SK-N-SH (cell line): ENCODE measurements at regions of chr2 and their contacts with region 1.

Region 1: GRCh38 chr2:41698678-41699422 is 349.0 kb upstream of the PKDCC start:
- DNase-seq: peak; percentile 85
- H3K4me3 ChIP-seq: peak overlapping the region in 1 of 2 experiments; percentile 12; a peak in 1 of 4 replicates
- H3K27ac ChIP-seq: no peak overlapping the region
- H3K4me1 ChIP-seq: peaks cover 0 to 6% of the 10 kb centered on the region in 2 experiments; a peak in 1 of 4 replicates
- H3K27me3 ChIP-seq: no peaks in the 10 kb centered on the region
- CTCF ChIP-seq: peak; percentile 92
- EP300 ChIP-seq: no peak
- RAD21 ChIP-seq: peak; percentile 96

Region 2: GRCh38 chr2:39919511-39920306 is 1779.1 kb before region 1 on chr2:
- CTCF ChIA-PET with region 1: interaction called, 82 read pairs
- POLR2A ChIA-PET with region 1: no interaction called
- DNase-seq: no peak
- H3K4me3 ChIP-seq: no peak overlapping the region
- H3K27ac ChIP-seq: no peak overlapping the region
- H3K4me1 ChIP-seq: no peaks in the 10 kb centered on the region; a peak in 1 of 4 replicates
- H3K27me3 ChIP-seq: no peaks in the 10 kb centered on the region
- CTCF ChIP-seq: no peak
- EP300 ChIP-seq: no peak
- RAD21 ChIP-seq: no peak

Region 3: GRCh38 chr2:40448468-40449079 is 1250.3 kb before region 1 on chr2:
- CTCF ChIA-PET with region 1: interaction called, 25 read pairs
- POLR2A ChIA-PET with region 1: no interaction called
- DNase-seq: peak; percentile 60
- H3K4me3 ChIP-seq: peak overlapping the region in 1 of 2 experiments; percentile 9; a peak in 1 of 4 replicates
- H3K27ac ChIP-seq: peak overlapping the region in 1 of 2 experiments; percentile 88; a peak in 1 of 4 replicates
- H3K4me1 ChIP-seq: peaks cover 0 to 17% of the 10 kb centered on the region in 2 experiments; a peak in 2 of 4 replicates
- H3K27me3 ChIP-seq: no peaks in the 10 kb centered on the region
- CTCF ChIP-seq: peak; percentile 80
- EP300 ChIP-seq: no peak
- RAD21 ChIP-seq: peak; percentile 76

Region 4: DNA sequence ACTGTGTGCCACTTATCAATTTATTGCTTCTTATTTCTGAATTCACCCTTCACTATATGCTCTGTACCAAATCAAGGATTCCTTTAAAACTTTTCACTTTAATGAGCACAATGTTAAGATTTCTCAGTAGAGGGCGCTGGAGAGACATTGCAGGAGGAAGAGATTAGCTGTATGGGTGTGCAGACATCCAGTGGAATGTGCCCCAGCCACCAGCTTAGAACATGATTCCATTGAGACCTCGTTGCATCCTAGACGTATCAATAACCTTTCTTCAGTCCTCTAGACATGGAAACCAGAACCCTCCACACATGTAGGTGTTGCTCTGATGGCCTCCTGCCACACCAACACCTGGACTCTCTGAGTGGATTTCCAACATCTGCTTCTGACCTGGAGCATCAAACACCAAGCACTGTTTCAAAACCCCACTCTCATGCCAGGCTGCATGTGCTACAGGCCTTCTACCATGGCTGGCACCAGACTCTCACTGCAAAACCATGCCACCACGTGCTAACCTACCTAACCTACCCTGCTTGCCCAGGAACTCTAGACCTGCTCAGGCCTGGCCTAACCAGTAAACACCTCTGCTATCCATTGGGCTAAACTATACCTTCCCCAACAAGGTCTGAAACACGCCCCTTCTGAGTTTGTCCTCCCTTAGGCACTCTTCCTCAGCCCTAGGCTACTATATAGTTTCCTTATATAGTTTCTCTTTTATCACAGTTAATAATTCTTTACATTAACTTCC is 284.2 kb before region 1 on chr2:
- CTCF ChIA-PET with region 1: interaction called, 133 read pairs
- POLR2A ChIA-PET with region 1: interaction called, 3 read pairs
- DNase-seq: peak; percentile 27
- H3K4me3 ChIP-seq: no peak overlapping the region
- H3K27ac ChIP-seq: no peak overlapping the region
- H3K4me1 ChIP-seq: no peaks in the 10 kb centered on the region
- H3K27me3 ChIP-seq: no peaks in the 10 kb centered on the region
- CTCF ChIP-seq: peak; percentile 73
- EP300 ChIP-seq: no peak
- RAD21 ChIP-seq: peak; percentile 85

Region 5: GRCh38 chr2:41678639-41679038 is 20.2 kb before region 1 on chr2:
- CTCF ChIA-PET with region 1: interaction called, 18 read pairs
- POLR2A ChIA-PET with region 1: no interaction called
- DNase-seq: no peak
- H3K4me3 ChIP-seq: no peak overlapping the region
- H3K27ac ChIP-seq: no peak overlapping the region
- H3K4me1 ChIP-seq: no peaks in the 10 kb centered on the region
- H3K27me3 ChIP-seq: no peaks in the 10 kb centered on the region
- CTCF ChIP-seq: no peak
- EP300 ChIP-seq: no peak
- RAD21 ChIP-seq: no peak

Region 6: DNA sequence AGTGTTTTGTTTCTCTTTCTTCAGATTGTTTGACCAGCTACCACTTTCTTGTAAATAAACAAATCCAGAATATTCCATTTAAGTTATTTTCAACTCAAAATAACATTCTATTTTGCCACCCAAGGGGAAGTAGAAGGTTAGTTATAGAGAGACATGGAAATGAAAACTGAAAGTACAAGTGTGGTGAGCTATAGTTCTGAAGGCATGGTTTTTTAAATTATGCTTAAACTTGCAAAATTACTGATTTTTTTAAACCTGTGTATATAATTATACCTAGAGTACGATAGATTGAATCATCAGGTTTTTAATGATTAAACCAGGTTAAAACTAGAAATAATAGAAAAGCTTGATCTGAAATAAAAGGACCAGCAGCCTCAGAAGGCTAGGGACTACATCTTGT is 21.5 kb after region 1 on chr2:
- CTCF ChIA-PET with region 1: interaction called, 22 read pairs
- POLR2A ChIA-PET with region 1: no interaction called
- DNase-seq: no peak
- H3K4me3 ChIP-seq: no peak overlapping the region; a peak in 1 of 4 replicates
- H3K27ac ChIP-seq: no peak overlapping the region
- H3K4me1 ChIP-seq: peaks cover 0 to 9% of the 10 kb centered on the region in 2 experiments; a peak in 2 of 4 replicates
- H3K27me3 ChIP-seq: no peaks in the 10 kb centered on the region
- CTCF ChIP-seq: no peak
- EP300 ChIP-seq: no peak
- RAD21 ChIP-seq: no peak

Region 7: GRCh38 chr2:42047488-42048298 is 348.8 kb after region 1 on chr2 and contains the start of gene PKDCC:
- CTCF ChIA-PET with region 1: no interaction called
- POLR2A ChIA-PET with region 1: no interaction called
- DNase-seq: peak; percentile 100
- H3K4me3 ChIP-seq: peak within 1 kb of the TSS; percentile 81 to 85
- H3K27ac ChIP-seq: peak within 1 kb of the TSS; percentile 5 to 100; a peak in 3 of 4 replicates
- H3K4me1 ChIP-seq: peaks cover 0 to 67% of the 10 kb centered on the region in 2 experiments; a peak in 2 of 4 replicates
- H3K27me3 ChIP-seq: 0 out of 2 replicates have a peak, but pooled peaks cover 8% of the 10 kb centered on the region
- CTCF ChIP-seq: no peak
- EP300 ChIP-seq: no peak
- RAD21 ChIP-seq: no peak
- polyA plus RNA-seq, gene PKDCC: 16.0 and 19.5 TPM in 2 replicates